WTC11 (cell line): ENCODE measurements at regions of chr6 and their contacts with region 1.

Region 1: DNA sequence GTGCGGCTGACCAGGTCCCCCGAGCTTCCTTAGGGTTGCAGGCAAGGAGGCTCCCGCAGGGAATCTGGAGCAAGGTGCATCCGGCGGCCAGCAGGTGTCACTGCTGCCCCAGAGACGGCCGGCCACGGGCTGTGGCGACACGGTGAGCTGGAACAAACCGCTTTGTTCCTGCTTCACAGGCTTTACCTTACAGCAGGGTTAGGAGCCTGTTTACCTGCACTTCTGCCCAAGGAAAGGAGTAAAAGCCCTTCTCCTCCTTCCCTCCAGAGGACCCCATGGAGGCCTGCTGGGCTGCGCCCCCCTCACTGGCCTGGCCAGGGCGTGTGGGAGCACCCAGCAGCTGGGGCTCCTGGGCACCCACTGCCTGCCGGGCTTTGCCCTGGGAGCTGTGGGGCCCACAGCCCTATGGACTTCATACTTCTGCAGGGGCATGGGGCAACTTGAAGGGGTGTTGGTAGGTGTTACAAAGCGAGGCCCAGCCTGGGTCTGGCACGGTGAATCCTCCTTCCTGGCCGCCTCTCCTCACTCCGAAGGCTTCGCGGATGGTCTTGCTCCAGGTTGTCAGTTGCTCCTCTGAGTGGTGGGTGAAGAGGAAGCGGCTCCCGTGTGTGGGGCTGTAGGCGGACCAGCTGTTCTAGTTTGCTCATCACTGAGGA is 88.4 kb downstream of the CDC5L start:
- DNase-seq: peak; percentile 92
- ATAC-seq: peak; percentile 83
- H3K4me3 Mint-ChIP-seq: no peak overlapping the region
- H3K27ac Mint-ChIP-seq: no peak overlapping the region
- H3K4me1 Mint-ChIP-seq: peaks cover 41% of the 10 kb centered on the region
- H3K27me3 Mint-ChIP-seq: peaks cover 2% of the 10 kb centered on the region; the same call in 1 of the 2 replicates
- CTCF ChIP-seq: peak; percentile 89

Region 2: GRCh38 chr6:44367681-44368080 is 108.2 kb before region 1 on chr6:
- CTCF ChIA-PET with region 1: no interaction called
- POLR2A ChIA-PET with region 1: no interaction called
- DNase-seq: no peak
- ATAC-seq: no peak
- H3K4me3 Mint-ChIP-seq: no peak overlapping the region
- H3K27ac Mint-ChIP-seq: no peak overlapping the region
- H3K4me1 Mint-ChIP-seq: peaks cover under 1% of the 10 kb centered on the region; the same call in 1 of the 2 replicates
- H3K27me3 Mint-ChIP-seq: no peaks in the 10 kb centered on the region; the same call in 1 of the 2 replicates
- CTCF ChIP-seq: no peak

Region 3: GRCh38 chr6:44381739-44382138 is 94.2 kb before region 1 on chr6:
- CTCF ChIA-PET with region 1: no interaction called
- POLR2A ChIA-PET with region 1: no interaction called
- DNase-seq: no peak
- ATAC-seq: no peak
- H3K4me3 Mint-ChIP-seq: no peak overlapping the region
- H3K27ac Mint-ChIP-seq: no peak overlapping the region
- H3K4me1 Mint-ChIP-seq: peaks cover 4% of the 10 kb centered on the region; the same call in 1 of the 2 replicates
- H3K27me3 Mint-ChIP-seq: no peaks in the 10 kb centered on the region
- CTCF ChIP-seq: no peak

Region 4: DNA sequence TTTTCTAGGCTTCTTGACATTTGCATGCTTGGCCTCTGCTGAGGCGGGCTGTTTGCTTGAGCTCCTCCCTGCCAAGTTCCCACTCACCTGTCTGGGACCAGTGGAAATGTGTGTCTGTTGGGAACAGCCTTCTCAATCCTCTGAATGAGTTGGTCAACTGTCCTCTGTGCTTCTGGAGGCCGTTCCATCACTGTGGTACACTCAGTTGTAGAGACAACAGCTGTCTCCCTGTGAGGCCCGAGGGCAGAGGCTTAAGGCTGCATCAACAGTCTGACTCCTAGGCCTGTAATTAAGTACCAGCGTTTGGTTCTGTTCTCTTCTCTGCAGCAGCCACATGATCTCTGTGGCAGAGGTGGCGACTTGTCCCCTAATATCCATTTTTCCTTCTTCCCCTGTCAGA is 22.5 kb after region 1 on chr6:
- CTCF ChIA-PET with region 1: interaction called, 17 read pairs
- POLR2A ChIA-PET with region 1: no interaction called
- DNase-seq: no peak
- ATAC-seq: no peak
- H3K4me3 Mint-ChIP-seq: no peak overlapping the region
- H3K27ac Mint-ChIP-seq: no peak overlapping the region
- H3K4me1 Mint-ChIP-seq: peaks cover 25% of the 10 kb centered on the region
- H3K27me3 Mint-ChIP-seq: no peaks in the 10 kb centered on the region; the same call in 1 of the 2 replicates
- CTCF ChIP-seq: no peak

Region 5: GRCh38 chr6:44569931-44570385 is 94.1 kb after region 1 on chr6:
- CTCF ChIA-PET with region 1: interaction called, 28 read pairs
- POLR2A ChIA-PET with region 1: interaction called, 3 read pairs
- DNase-seq: no peak
- ATAC-seq: peak; percentile 64
- H3K4me3 Mint-ChIP-seq: no peak overlapping the region
- H3K27ac Mint-ChIP-seq: no peak overlapping the region
- H3K4me1 Mint-ChIP-seq: peaks cover 13% of the 10 kb centered on the region
- H3K27me3 Mint-ChIP-seq: no peaks in the 10 kb centered on the region; the same call in 1 of the 2 replicates
- CTCF ChIP-seq: no peak

Region 6: GRCh38 chr6:44630125-44631028 is 154.5 kb after region 1 on chr6:
- CTCF ChIA-PET with region 1: interaction called, 186 read pairs
- POLR2A ChIA-PET with region 1: interaction called, 3 read pairs
- DNase-seq: peak; percentile 78
- ATAC-seq: peak; percentile 89
- H3K4me3 Mint-ChIP-seq: no peak overlapping the region
- H3K27ac Mint-ChIP-seq: no peak overlapping the region
- H3K4me1 Mint-ChIP-seq: peaks cover 41% of the 10 kb centered on the region
- H3K27me3 Mint-ChIP-seq: peaks cover 4% of the 10 kb centered on the region
- CTCF ChIP-seq: 0 out of 2 replicates have a peak, but pooled peaks have one; percentile 33

Region 7: DNA sequence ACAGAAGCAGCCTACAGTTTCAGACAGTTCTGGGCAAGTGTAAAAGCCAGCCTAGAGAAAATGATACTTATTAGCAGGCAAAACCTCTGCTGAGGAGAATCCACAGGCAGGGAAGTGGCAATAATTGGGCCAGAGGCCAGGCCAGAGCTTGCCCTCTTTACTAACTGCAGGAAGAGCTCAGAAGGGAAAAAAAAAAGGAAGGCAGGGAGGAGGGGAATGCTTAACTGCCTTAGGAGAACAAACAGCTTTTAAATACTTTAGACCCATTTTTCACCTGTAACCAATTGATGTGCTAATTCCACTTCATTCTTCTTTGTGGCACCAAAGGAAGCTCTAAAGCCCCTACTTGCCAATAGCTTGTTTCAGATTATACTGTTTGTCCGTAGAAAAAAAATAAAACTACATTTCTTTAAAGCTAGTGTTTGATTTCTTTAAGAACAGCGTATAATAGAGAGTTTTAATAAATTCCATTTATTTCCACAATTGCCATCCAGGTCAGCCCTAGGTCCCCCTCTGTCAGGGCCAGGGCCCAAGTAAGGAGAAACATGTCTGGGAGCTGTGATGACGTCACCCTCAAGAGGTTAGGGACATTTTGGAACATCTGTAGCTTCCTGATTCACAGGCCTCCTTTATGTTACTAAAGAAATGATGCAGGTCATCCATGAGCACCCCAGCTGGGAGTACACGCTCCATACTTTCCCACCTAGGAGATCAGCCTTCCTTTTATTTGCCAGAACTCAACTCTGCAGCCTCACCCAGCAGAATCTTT is 295.9 kb after region 1 on chr6:
- CTCF ChIA-PET with region 1: interaction called, 13 read pairs
- POLR2A ChIA-PET with region 1: no interaction called
- DNase-seq: no peak
- ATAC-seq: peak; percentile 93
- H3K4me3 Mint-ChIP-seq: 0 out of 2 replicates have a peak overlapping the region, but pooled peaks have one; percentile 7
- H3K27ac Mint-ChIP-seq: peak overlapping the region; percentile 21
- H3K4me1 Mint-ChIP-seq: peaks cover 29% of the 10 kb centered on the region
- H3K27me3 Mint-ChIP-seq: no peaks in the 10 kb centered on the region
- CTCF ChIP-seq: no peak

Region 8: DNA sequence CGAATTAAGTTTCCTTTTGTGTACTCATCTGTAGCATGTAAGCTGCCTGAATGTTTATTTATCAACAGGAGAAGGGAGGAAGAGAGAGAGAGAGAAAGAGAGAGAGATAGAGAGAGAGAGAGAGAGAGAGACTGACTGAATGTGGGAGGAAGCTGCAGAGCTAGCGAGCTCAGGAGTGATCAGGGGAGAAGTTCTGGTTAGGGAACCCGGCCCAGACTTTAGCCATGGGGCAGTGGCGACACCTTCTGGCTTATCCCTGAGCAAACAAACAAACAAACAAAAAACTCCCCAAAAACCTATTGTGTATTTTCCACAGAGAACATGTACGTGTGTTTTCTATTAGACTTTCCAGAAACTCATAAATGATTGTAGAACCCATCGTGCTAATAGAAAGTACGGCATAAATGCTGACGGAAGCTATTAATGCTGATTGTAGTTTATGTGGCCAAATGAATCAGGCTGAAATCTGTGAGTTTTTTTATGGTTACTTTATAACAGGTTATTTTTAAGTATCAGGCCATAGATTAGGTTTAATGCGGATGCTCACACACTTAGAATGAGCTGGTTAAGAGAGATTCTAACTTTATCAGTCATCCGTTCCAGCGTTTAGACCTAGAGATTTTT is 1446.9 kb after region 1 on chr6:
- CTCF ChIA-PET with region 1: interaction called, 30 read pairs
- POLR2A ChIA-PET with region 1: no interaction called
- DNase-seq: peak; percentile 75
- ATAC-seq: peak; percentile 83
- H3K4me3 Mint-ChIP-seq: no peak overlapping the region
- H3K27ac Mint-ChIP-seq: no peak overlapping the region
- H3K4me1 Mint-ChIP-seq: peaks cover 34% of the 10 kb centered on the region
- H3K27me3 Mint-ChIP-seq: peaks cover 11% of the 10 kb centered on the region; the same call in 1 of the 2 replicates
- CTCF ChIP-seq: peak; percentile 50